GM23248 (cell line): ENCODE measurements at regions of chr21 and their contacts with region 1.

Region 1: DNA sequence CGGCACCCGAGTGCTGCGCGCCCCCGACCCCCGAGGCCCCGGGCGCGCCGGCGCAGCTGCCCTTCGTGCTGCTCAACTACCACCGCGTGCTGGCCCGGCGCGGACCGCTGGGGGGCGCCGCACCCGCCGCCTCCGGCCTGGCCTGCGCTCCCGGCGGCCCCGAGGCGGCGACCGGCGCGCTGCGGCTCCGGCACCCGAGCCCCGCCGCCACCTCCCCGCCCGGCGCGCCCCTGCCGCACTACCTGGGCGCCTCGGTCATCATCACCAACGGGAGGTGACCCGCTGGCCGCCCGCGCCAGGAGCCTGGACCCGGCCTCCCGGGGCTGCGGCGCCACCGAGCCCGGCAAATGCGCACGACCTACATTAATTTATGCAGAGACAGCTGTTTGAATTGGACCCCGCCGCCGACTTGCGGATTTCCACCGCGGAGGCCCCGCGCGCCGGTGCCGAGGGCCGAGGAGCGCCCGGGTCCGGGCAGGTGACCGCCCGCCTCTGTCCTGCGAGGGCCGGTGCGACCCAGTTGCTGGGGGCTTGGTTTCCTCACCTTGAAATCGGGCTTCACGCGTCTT is 49.0 kb downstream of the SIM2 start:
- DNase-seq: peak; percentile 68
- H3K4me3 ChIP-seq: peak overlapping the region; percentile 71
- H3K27ac ChIP-seq: no peak overlapping the region
- H3K4me1 ChIP-seq: no peaks in the 10 kb centered on the region
- H3K27me3 ChIP-seq: no peaks in the 10 kb centered on the region

Region 2: GRCh38 chr21:36069713-36070573 is 678.0 kb before region 1 on chr21 and contains the start of gene CBR1:
- in situ Hi-C with region 1: no loop called
- DNase-seq: peak; percentile 96
- H3K4me3 ChIP-seq: peak within 1 kb of the TSS; percentile 86
- H3K27ac ChIP-seq: peak within 1 kb of the TSS; percentile 81
- H3K4me1 ChIP-seq: peaks cover 17% of the 10 kb centered on the region
- H3K27me3 ChIP-seq: no peaks in the 10 kb centered on the region
- total RNA-seq, gene CBR1: 179 and 205 TPM in 2 replicates

Region 3: GRCh38 chr21:36630485-36631206 is 117.3 kb before region 1 on chr21:
- in situ Hi-C with region 1: loop called (anchors 25 kb)
- DNase-seq: peak; percentile 66
- H3K4me3 ChIP-seq: no peak overlapping the region
- H3K27ac ChIP-seq: no peak overlapping the region
- H3K4me1 ChIP-seq: no peaks in the 10 kb centered on the region; the same call in 1 of the 2 replicates
- H3K27me3 ChIP-seq: peaks cover 7% of the 10 kb centered on the region; the same call in 1 of the 2 replicates